Common myeloid progenitor, CD34-positive (primary cell): ENCODE measurements at regions of chr12 and their contacts with region 1.

Region 1: DNA sequence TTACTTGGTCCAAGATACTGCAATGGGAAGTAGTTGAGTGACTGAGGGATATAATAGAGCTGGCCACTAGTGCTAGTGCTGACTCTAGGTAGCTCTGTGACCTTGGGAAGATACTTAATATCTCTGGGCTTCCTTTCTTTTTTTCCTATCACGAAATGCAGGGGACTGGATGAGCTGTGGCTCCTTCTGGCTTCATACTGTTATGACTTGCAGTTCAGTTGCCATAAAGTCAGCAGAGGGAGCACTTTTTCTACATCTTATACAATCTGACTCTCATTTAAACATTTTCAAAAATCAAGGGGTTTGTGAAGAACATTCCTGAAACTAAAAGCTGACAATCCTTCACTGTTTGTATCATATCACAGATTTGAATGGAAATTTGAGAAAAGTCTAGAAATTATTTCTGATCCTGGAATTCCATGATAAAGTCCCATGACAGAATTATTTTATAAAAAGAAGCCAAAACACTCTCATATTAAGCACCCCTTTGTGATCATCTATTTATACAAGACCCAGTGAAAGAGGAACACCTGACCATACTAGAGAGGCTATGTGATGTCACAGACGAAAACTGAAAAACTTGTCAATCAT is 5.4 kb downstream of the BHLHE41 start:
- DNase-seq: peak; percentile 62 to 74 (median 73)
- H3K4me3 ChIP-seq: no peak overlapping the region
- H3K27ac ChIP-seq: no peak overlapping the region
- H3K4me1 ChIP-seq: peaks cover 3 to 29% (median 23%) of the 10 kb centered on the region in 4 experiments
- H3K27me3 ChIP-seq: peaks cover 8 to 34% (median 16%) of the 10 kb centered on the region in 5 experiments

Region 2: DNA sequence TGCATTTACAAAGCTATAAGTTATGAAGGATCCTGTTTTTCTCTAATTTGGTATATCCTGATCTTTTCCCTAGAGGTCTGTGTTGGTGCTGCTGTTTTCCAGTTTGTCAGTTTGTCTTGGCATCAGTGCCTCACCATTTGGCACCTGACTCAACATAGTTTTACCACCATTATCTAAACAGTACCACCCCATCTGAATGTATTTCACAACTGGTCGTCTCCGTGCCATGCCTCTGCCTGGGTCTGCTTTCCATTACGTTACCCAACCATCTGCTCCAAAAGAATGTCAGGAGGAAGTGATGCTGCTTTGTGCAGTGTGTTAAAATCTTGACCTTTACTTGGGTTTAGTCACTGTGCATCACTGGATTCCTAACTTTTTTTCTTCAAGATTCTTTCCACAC is 290.3 kb before region 1 on chr12:
- CTCF ChIA-PET with region 1: no interaction called
- POLR2A ChIA-PET with region 1: no interaction called
- DNase-seq: no peak
- H3K4me3 ChIP-seq: no peak overlapping the region
- H3K27ac ChIP-seq: no peak overlapping the region
- H3K4me1 ChIP-seq: no peaks in the 10 kb centered on the region
- H3K27me3 ChIP-seq: no peaks in the 10 kb centered on the region

Region 3: GRCh38 chr12:26133521-26133920 is 14.0 kb after region 1 on chr12:
- CTCF ChIA-PET with region 1: interaction called, 18 read pairs
- POLR2A ChIA-PET with region 1: no interaction called
- DNase-seq: no peak
- H3K4me3 ChIP-seq: no peak overlapping the region
- H3K27ac ChIP-seq: no peak overlapping the region
- H3K4me1 ChIP-seq: peaks cover 2 to 11% (median 2%) of the 10 kb centered on the region in 4 experiments
- H3K27me3 ChIP-seq: peaks cover 0 to 9% (median 0%) of the 10 kb centered on the region in 5 experiments

Region 4: GRCh38 chr12:26274441-26275312 is 155.2 kb after region 1 on chr12:
- CTCF ChIA-PET with region 1: interaction called, 15 read pairs
- POLR2A ChIA-PET with region 1: interaction called, 4 read pairs
- DNase-seq: peak; percentile 97 to 99 (median 99)
- H3K4me3 ChIP-seq: peak overlapping the region in 2 of 7 experiments; percentile 17 to 31
- H3K27ac ChIP-seq: peak overlapping the region; percentile 74 to 80
- H3K4me1 ChIP-seq: peaks cover 6 to 79% (median 43%) of the 10 kb centered on the region in 4 experiments
- H3K27me3 ChIP-seq: no peaks in the 10 kb centered on the region

Region 5: DNA sequence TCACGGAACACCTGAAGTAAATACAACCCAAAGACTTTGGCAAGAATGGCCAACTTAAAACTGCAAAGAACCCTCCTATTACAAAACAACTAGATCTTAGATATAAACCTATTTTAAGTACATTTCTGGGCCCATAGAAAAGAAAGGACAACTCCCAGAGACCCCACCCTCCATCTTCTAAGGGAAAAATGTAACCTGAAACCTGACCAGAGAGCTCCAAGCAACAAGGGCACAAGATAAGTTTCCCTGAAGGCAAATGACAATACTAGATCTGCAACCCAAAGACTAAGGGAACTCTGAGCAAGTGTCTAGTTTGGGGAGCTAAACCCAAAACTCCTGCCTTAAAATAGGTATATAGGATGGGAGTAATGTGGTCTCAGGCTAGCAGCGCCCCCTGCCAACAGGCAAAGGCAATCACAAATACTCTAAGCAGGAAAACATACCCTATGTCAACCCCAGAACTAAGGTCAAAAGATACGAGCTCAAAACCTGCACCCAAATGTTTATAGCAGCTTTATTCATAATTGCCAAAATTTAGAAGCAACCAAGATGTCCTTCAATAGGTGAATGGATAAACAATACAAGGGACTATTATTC is 494.6 kb after region 1 on chr12:
- CTCF ChIA-PET with region 1: interaction called, 26 read pairs
- POLR2A ChIA-PET with region 1: no interaction called
- DNase-seq: peak; percentile 40 to 67 (median 56)
- H3K4me3 ChIP-seq: no peak overlapping the region
- H3K27ac ChIP-seq: no peak overlapping the region
- H3K4me1 ChIP-seq: no peaks in the 10 kb centered on the region
- H3K27me3 ChIP-seq: no peaks in the 10 kb centered on the region